Breast epithelium (tissue), 4 donors: ENCODE measurements at regions of chr18 and their contacts with region 1.

Region 1: GRCh38 chr18:61340148-61340547 is 6.9 kb downstream of the CDH20 start:
- DNase-seq: no peak
- H3K4me3 ChIP-seq: no peak overlapping the region
- H3K27ac ChIP-seq: no peak overlapping the region
- H3K4me1 ChIP-seq: no peaks in the 10 kb centered on the region
- H3K27me3 ChIP-seq: peaks cover 0 to 1% of the 10 kb centered on the region in 2 donors
- CTCF ChIP-seq: no peak
- POLR2A ChIP-seq: no peak

Region 2: DNA sequence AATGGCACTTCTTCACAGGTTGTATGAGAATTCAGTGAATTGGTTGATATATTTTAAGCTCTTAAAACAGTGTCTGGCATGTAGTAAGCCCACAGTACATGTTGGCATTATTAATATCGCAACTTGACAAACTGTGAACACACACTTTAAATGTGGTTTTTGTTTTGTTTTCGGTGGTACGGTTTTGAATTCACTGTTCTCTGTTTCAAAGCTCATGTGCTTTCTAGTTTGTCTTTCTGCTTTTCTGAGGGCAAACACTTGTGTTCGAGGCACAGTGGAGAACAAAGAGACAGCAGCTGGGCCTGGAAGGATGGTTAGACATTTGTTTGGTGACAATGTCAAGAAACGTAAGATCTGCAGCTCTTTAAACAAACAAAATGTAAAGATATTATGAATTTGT is 691.0 kb before region 1 on chr18:
- intact Hi-C with region 1: loop called (anchors 5 kb)
- DNase-seq: no peak
- H3K4me3 ChIP-seq: no peak overlapping the region
- H3K27ac ChIP-seq: no peak overlapping the region
- H3K4me1 ChIP-seq: no peaks in the 10 kb centered on the region
- H3K27me3 ChIP-seq: no peaks in the 10 kb centered on the region
- CTCF ChIP-seq: no peak
- POLR2A ChIP-seq: no peak

Region 3: GRCh38 chr18:61308795-61309393 is 31.3 kb before region 1 on chr18:
- intact Hi-C with region 1: no loop called
- DNase-seq: no peak
- H3K4me3 ChIP-seq: no peak overlapping the region
- H3K27ac ChIP-seq: no peak overlapping the region
- H3K4me1 ChIP-seq: no peaks in the 10 kb centered on the region
- H3K27me3 ChIP-seq: no peaks in the 10 kb centered on the region
- CTCF ChIP-seq: no peak
- POLR2A ChIP-seq: no peak

Region 4: DNA sequence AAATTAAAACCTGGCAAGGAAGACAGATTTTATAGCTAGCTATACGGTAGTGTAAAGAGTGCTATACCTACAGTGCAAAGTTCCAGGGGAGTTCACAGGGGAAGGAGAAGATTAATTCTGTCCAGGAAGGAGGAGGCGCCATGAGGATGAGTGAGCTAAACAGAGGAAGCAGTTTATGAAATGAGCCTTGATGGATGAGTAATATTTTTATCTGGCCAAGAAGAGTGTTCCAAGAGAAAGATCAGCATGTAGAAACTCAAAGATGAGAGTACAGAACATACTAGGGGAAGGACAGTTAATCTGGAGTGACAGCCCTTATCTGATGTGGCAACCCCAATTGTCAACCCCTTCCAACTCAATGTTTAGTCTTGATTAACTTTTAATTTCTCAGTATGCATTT is 47.9 kb after region 1 on chr18:
- intact Hi-C with region 1: no loop called
- DNase-seq: no peak
- H3K4me3 ChIP-seq: no peak overlapping the region
- H3K27ac ChIP-seq: no peak overlapping the region
- H3K4me1 ChIP-seq: no peaks in the 10 kb centered on the region
- H3K27me3 ChIP-seq: no peaks in the 10 kb centered on the region
- CTCF ChIP-seq: no peak
- POLR2A ChIP-seq: no peak